Activated CD8-positive, alpha-beta T cell treated with anti-CD3 and anti-CD28 coated beads for 36 hours (primary cell): ENCODE measurements at regions of chrX and their contacts with region 1.

Region 1: DNA sequence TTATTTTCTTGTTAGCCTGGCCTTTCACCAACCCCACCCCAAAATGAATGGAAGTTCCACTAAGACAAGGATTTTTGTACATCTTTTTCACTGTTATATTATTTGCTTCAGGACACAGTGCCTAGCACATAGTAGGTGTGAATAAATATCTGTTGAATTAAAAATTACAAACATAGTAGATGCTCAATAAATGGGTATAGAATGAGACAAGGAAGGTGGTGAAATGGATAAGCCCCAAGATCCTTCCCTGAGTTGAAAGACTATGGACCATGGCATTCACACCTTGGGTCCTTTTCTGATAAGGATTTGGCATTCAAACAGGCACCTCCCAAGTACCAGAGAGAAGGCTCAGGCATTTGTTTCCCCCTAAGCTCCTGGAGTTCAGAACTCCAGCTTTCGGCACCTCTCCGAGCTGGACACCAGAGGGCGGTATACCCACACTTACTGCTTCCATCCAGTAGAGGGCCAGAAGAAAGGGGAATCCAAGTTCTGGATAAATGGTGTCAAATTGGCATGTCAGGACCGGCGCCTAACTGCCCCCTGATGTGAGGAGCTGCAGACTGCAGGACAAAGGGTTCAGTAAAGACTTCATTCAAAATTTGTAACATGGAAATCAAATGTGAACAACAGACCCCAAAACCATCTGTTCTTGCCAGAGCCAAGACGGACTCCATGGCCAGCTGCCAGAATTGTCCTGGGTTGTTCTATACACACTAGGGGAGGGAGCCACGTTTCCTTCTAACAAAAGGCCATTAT is 193.0 kb downstream of the GPC3 start:
- DNase-seq: peak; percentile 59
- ATAC-seq: peak; percentile 74
- H3K4me3 Mint-ChIP-seq: no peak overlapping the region
- H3K27ac Mint-ChIP-seq: no peak overlapping the region
- H3K4me1 Mint-ChIP-seq: no peaks in the 10 kb centered on the region
- H3K27me3 Mint-ChIP-seq: no peaks in the 10 kb centered on the region
- CTCF ChIP-seq: peak; percentile 78

Region 2: GRCh38 chrX:133921764-133922389 is 129.5 kb after region 1 on chrX:
- CTCF ChIA-PET with region 1: interaction called, 14 read pairs
- POLR2A ChIA-PET with region 1: no interaction called
- intact Hi-C with region 1: no loop called
- DNase-seq: peak; percentile 45
- ATAC-seq: peak; percentile 67
- H3K4me3 Mint-ChIP-seq: no peak overlapping the region
- H3K27ac Mint-ChIP-seq: no peak overlapping the region
- H3K4me1 Mint-ChIP-seq: peaks cover 12% of the 10 kb centered on the region
- H3K27me3 Mint-ChIP-seq: no peaks in the 10 kb centered on the region
- CTCF ChIP-seq: peak; percentile 17

Region 3: DNA sequence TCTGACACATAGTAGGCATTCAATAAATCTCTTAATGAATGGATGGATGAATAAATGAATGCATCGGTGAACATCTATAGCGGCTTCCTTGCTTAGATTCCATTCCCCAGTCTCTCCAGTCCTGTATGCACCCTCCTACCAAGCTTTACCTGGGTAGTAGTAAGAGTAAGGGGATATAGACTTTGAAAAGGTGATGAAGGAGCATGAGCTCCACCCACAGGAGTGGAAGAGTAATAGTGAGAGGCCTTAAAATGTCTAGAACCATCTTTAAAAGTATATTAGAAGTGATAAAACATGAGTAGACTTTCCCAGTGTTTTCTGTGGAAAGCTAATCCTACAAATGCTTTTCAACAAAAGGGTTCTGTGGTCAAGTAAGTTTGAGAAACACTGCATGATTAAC is 228.5 kb after region 1 on chrX:
- CTCF ChIA-PET with region 1: interaction called, 31 read pairs
- POLR2A ChIA-PET with region 1: no interaction called
- intact Hi-C with region 1: loop called (anchors 5 kb)
- DNase-seq: no peak
- ATAC-seq: no peak
- H3K4me3 Mint-ChIP-seq: no peak overlapping the region
- H3K27ac Mint-ChIP-seq: no peak overlapping the region
- H3K4me1 Mint-ChIP-seq: no peaks in the 10 kb centered on the region
- H3K27me3 Mint-ChIP-seq: peaks cover 2% of the 10 kb centered on the region
- CTCF ChIP-seq: no peak

Region 4: DNA sequence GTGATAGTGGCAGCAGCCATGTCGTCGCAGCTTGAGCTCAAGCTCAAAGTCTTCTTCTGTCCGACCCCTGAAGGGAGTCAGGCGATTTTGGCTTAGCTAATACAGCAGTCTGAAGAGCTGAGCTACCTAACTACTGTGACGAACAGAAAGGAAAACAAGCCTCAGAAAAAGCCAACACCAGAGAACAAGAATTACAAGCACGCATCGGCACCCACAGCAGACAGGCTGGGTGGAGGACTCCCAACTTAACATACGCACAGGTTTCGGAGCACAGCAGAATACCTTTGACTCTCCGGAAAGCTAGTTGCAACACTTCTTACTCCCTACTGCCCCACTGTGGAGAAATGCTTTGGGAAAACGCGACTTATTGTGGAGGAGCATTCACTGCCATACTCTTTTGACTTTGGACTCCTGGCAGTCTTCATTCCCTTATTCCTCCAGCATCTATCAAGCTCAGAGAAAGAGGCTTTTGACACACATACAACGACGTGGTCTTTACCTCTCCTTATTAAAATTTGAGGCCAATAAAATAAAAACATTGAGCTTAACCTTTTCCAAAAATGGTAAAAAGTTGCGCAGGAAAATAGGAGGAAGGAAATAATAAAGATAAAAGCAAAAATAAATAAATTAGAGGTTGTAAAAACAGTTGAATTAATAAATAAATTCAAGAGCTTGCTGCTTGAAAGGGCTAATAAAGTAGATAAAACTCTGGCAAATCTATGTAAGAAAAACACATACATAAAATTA is 234.4 kb after region 1 on chrX:
- CTCF ChIA-PET with region 1: interaction called, 31 read pairs
- POLR2A ChIA-PET with region 1: no interaction called
- intact Hi-C with region 1: loop called (anchors 5 kb)
- DNase-seq: peak; percentile 42
- ATAC-seq: peak; percentile 58
- H3K4me3 Mint-ChIP-seq: no peak overlapping the region
- H3K27ac Mint-ChIP-seq: no peak overlapping the region
- H3K4me1 Mint-ChIP-seq: peaks cover 4% of the 10 kb centered on the region
- H3K27me3 Mint-ChIP-seq: no peaks in the 10 kb centered on the region
- CTCF ChIP-seq: no peak